PC-9 (cell line): ENCODE measurements at regions of chr3 and their contacts with region 1.

Region 1: DNA sequence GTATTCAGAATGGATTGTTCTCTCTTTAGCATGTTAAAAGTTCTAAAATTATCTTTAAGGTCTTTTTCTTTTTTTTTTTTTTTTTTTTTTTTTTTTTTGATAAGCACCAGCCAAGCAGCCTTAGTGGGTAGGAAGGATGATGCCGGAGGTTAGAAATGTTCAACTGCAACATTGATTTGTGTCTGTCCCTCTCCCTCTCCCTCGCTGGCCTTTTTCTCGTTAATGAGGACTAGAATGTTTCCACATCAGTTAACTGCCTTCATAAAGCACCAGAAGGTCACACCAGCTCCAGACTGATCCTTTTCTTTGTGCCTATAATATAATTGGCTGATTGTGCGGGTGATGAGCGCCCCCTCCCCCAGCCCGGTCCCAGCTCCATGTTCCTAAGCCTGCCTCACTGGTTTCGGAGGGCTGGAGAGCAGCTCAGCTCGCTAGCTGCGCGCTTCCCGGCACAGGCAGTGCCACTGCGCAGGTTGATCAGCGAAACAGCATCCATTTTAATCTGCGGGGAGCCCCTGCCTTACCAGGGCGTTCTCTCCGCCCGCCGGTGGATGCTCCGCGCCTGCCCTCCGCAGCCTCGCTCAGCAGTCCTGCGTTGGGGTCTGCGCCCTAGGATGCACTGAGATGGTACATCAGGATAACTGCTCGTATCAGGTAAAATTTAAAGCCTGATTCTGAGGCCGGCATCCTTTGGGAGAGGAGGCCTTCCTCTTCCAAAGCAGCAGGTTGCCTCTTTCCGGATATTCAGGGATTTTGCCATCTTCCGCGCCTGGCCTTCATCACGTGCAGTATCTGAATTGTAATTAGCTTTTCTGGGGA is 148.9 kb upstream of the IL12A start:
- DNase-seq: no peak
- H3K4me3 ChIP-seq: no peak within 1 kb of the TSS
- H3K27ac ChIP-seq: peak within 1 kb of the TSS; percentile 32
- H3K4me1 ChIP-seq: peaks cover 30% of the 10 kb centered on the region
- H3K27me3 ChIP-seq: no peaks in the 10 kb centered on the region
- CTCF ChIP-seq: no peak

Region 2: DNA sequence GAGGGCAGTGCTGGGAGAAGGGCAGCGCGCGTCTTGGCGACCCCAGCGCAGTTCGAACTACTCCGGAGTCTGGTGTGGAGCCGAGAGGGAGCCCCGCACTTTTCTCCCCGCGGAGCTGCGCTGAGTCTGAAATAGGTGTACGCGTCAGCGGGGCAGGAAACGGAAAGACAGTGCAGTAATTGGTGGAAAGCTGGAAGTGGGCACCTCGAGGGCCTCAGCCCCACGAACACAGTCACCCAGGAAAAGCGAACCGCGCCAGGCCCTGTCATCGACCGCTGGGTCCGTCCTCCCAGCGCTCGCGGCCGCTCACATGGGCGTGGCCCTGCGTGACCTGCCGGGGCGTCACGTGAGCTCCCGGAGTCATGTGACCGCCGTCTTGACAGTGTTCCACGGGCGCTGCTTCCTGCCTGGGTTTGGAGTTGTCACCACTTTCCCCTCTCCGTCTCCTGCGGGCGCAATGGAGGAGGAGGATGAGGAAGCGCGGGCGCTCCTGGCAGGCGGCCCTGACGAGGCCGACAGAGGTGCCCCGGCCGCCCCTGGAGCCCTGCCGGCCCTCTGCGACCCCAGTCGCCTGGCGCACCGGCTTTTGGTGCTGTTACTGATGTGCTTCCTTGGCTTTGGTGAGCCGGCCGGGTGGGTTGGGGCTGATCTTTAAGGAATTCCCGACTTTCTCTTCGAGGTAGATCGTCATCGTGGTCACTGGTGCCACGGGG is 1037.9 kb before region 1 on chr3 and contains the start of gene MFSD1:
- CTCF ChIA-PET with region 1: no interaction called
- POLR2A ChIA-PET with region 1: interaction called, 19 read pairs
- intact Hi-C with region 1: no loop called
- DNase-seq: peak; percentile 83 to 92
- H3K4me3 ChIP-seq: peak within 1 kb of the TSS; percentile 82
- H3K27ac ChIP-seq: peak within 1 kb of the TSS; percentile 43; the same call in 1 of the 2 replicates
- H3K4me1 ChIP-seq: peaks cover 35% of the 10 kb centered on the region
- H3K27me3 ChIP-seq: no peaks in the 10 kb centered on the region
- CTCF ChIP-seq: no peak
- total RNA-seq, gene MFSD1: 31.0 and 38.6 TPM in 2 replicates

Region 3: DNA sequence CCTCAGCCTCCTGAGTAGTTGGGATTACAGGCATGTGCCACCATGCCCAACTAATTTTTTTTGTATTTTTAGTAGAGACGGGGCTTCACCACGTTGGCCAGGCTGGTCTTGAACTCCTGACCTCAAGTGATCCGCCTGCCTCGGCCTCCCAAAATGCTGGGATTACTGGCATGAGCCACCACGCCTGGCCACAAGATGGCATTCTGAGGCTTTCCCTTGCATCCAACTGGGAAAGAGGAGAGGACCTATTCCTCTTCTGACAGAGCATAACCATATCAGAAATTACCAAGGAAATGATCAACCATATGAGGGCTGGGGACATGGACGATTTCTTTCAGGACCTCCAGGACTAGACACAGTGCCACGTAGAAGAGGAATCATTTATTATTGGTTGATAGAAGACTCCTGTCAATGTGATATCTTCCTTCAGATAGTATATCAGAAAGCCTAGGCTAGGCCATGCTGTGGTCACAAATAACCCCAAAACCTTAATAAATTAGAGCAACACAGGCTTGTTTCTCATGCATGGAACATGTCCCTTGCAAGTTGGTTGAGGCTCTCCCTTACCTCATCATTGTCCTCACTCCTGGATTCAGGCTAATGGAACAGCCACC is 223.5 kb before region 1 on chr3:
- CTCF ChIA-PET with region 1: no interaction called
- POLR2A ChIA-PET with region 1: no interaction called
- intact Hi-C with region 1: no loop called
- DNase-seq: peak; percentile 43 to 69
- H3K4me3 ChIP-seq: no peak overlapping the region
- H3K27ac ChIP-seq: no peak overlapping the region
- H3K4me1 ChIP-seq: peaks cover 16% of the 10 kb centered on the region
- H3K27me3 ChIP-seq: no peaks in the 10 kb centered on the region
- CTCF ChIP-seq: peak; percentile 80

Region 4: GRCh38 chr3:159724627-159725026 is 115.1 kb before region 1 on chr3:
- CTCF ChIA-PET with region 1: no interaction called
- POLR2A ChIA-PET with region 1: no interaction called
- intact Hi-C with region 1: no loop called
- DNase-seq: no peak
- H3K4me3 ChIP-seq: no peak overlapping the region
- H3K27ac ChIP-seq: no peak overlapping the region
- H3K4me1 ChIP-seq: peaks cover 16% of the 10 kb centered on the region
- H3K27me3 ChIP-seq: no peaks in the 10 kb centered on the region
- CTCF ChIP-seq: no peak

Region 5: DNA sequence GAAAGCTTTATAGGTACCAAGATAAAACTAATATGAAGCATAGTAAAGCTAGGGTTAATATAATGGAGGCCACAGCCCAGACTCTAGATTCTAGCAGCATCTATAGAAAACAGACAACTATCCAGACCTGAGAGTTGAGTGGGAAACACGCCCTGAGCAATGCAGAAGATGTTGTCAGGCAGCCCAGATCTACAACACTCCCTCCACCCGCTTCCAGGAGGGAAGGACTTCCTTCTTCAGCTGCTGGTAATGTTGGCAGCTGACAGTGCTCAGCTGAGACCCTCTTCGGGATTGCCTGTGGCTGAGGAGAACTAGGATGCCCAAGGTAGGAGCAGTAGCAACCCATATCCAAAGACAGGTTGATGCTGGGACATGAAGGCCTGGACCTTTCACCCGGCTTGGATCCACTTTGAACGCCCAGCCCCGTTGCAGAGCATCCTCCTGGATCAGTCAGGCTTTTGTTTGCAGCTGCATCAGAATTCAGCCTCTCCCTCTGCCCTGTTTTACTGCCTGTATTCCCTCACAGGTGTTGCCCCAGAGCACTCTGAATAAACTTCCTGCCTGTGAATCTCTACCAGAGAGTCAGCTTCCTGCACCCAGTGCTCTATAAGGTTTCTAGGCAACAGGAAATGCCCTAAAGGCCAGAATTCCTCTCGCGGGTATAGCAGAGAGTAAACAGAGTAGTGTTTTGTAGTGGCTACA is 25.8 kb before region 1 on chr3:
- CTCF ChIA-PET with region 1: no interaction called
- POLR2A ChIA-PET with region 1: interaction called, 22 read pairs
- intact Hi-C with region 1: no loop called
- DNase-seq: peak; percentile 79 to 97
- H3K4me3 ChIP-seq: 0 out of 2 replicates have a peak overlapping the region, but pooled peaks have one; percentile 18
- H3K27ac ChIP-seq: peak overlapping the region; percentile 52
- H3K4me1 ChIP-seq: peaks cover 51% of the 10 kb centered on the region
- H3K27me3 ChIP-seq: no peaks in the 10 kb centered on the region
- CTCF ChIP-seq: no peak

Region 6: DNA sequence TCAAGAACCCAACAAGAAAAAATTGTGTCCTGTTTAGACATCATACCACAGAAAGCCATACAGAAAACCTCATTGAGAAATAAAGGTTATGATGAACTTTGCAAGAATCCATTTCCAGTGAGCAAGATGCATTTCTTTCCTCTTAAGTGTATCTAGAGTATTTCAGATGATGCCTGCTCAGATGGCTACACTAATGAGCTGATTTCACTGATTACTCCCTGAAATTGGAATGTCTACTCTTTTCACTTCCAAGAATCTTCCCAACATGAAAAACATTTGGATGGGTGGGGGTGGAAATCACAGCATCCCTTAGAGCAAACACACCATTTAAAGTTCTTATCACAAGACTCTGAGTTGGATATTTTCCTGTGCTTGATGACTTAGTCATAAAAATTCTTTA is 107.5 kb after region 1 on chr3:
- CTCF ChIA-PET with region 1: no interaction called
- POLR2A ChIA-PET with region 1: no interaction called
- intact Hi-C with region 1: no loop called
- DNase-seq: no peak
- H3K4me3 ChIP-seq: no peak overlapping the region
- H3K27ac ChIP-seq: no peak overlapping the region
- H3K4me1 ChIP-seq: peaks cover under 1% of the 10 kb centered on the region
- H3K27me3 ChIP-seq: no peaks in the 10 kb centered on the region
- CTCF ChIP-seq: no peak

Region 7: GRCh38 chr3:160027541-160028195 is 187.9 kb after region 1 on chr3:
- CTCF ChIA-PET with region 1: interaction called, 5 read pairs
- POLR2A ChIA-PET with region 1: interaction called, 11 read pairs
- intact Hi-C with region 1: no loop called
- DNase-seq: peak; percentile 33 to 56
- H3K4me3 ChIP-seq: no peak overlapping the region
- H3K27ac ChIP-seq: peak overlapping the region; percentile 63
- H3K4me1 ChIP-seq: peaks cover 12% of the 10 kb centered on the region
- H3K27me3 ChIP-seq: no peaks in the 10 kb centered on the region
- CTCF ChIP-seq: no peak